Esophagus muscularis mucosa (tissue), 4 donors: ENCODE measurements at regions of chr11 and their contacts with region 1.

Region 1: GRCh38 chr11:64204464-64204989 is 2.0 kb upstream of the FERMT3 start:
- DNase-seq: no peak
- H3K4me3 ChIP-seq: no peak overlapping the region
- H3K27ac ChIP-seq: peak overlapping the region; percentile 1 to 45 (median 34)
- H3K4me1 ChIP-seq: peaks cover 19 to 50% (median 35%) of the 10 kb centered on the region in 4 donors
- H3K27me3 ChIP-seq: no peaks in the 10 kb centered on the region
- CTCF ChIP-seq: peak; percentile 53 to 79 (median 68)
- EP300 ChIP-seq: no peak
- POLR2A ChIP-seq: no peak

Region 2: GRCh38 chr11:64252003-64252872 is 47.7 kb after region 1 on chr11:
- intact Hi-C with region 1: loop called (anchors 1 kb)
- DNase-seq: no peak
- H3K4me3 ChIP-seq: peak overlapping the region; percentile 88 to 93 (median 92)
- H3K27ac ChIP-seq: peak overlapping the region; percentile 81 to 86 (median 84)
- H3K4me1 ChIP-seq: peaks cover 36 to 57% (median 49%) of the 10 kb centered on the region in 4 donors
- H3K27me3 ChIP-seq: no peaks in the 10 kb centered on the region
- CTCF ChIP-seq: peak; percentile 13 to 37 (median 21)
- EP300 ChIP-seq: no peak
- POLR2A ChIP-seq: no peak

Region 3: DNA sequence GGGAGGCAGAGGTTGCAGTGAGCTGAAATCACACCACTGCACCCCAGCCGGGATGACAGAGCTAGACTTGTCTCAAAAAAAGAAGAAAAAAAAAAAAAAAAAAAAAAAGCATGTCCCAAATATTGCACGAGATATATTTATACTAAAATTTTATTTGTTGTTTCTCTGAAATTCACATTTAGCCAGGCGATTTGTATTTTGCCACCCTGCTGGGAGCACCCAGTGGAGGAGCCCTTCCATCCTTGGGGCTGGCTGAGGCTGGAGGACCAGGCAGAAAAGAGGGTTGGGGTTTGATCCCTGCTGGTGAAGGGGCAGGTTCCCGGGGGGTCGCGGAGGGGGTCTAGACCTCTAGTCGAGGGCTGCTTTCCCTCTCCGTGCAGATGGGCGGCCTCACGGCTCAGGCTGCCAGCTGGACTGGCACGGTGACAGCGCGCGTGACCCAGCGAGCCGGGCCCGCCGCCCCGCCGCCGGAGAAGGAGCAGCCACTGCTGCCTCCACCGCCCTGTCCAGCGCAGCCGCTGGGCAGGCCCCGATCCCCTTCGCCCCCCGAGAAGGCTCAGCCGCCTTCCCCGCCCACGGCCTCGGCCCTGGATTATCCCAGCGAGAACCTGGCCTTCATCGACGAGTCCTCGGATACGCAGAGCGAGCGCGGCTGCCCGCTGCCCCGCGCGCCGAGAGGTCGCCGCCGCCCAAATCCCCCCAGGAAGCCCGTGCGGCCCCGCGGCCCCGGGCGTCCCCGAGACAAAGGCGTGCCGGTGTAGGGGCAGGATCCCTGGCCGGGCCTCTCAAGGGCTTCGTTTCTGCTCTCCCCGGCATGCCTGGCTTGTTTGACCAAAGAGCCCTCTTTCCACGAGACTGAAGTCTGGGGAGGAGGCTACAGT is 94.7 kb after region 1 on chr11:
- intact Hi-C with region 1: loop called (anchors 5 kb)
- DNase-seq: no peak
- H3K4me3 ChIP-seq: peak overlapping the region; percentile 52 to 61 (median 53)
- H3K27ac ChIP-seq: peak overlapping the region in 3 of 4 donors; percentile 7 to 57 (median 52)
- H3K4me1 ChIP-seq: peaks cover 26 to 44% (median 40%) of the 10 kb centered on the region in 4 donors
- H3K27me3 ChIP-seq: peaks cover 7 to 92% (median 49%) of the 10 kb centered on the region in 4 donors
- CTCF ChIP-seq: no peak
- EP300 ChIP-seq: no peak
- POLR2A ChIP-seq: no peak